CD4-positive, alpha-beta memory T cell (primary cell): ENCODE measurements at regions of chr17 and their contacts with region 1.

Region 1: DNA sequence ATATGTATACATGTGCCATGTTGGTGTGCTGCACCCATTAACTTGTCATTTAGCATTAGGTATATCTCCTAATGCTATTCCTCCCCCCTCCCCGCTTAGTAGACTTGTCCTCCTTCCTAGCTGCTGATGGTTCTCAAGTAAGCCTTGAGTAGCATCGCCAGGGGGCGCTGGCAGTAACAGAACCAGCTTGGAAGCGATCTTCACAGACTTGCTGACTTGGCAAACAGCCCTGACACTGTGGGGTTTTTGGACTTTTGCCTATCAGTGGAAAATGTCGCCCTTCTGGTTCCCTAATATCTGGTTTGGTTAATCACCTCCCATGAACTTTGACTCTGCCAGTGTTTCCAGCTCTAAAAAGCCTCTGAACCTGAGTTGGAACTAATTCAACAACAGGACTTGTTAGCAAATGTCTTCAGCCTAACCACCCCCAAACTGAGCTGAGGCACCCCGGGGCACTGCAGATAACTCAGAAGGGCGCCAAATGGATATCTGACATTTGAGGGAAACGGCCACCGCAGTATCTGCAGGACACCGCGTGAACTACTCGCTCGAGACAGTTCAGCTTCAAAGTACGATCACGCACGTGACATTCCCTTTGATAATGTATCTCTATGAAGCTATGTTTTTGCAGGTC is 15.4 kb upstream of the SPATA32 start:
- DNase-seq: peak; percentile 83 to 91 (median 85)
- H3K4me3 ChIP-seq: no peak overlapping the region
- H3K4me3 Mint-ChIP-seq: no peak overlapping the region
- H3K27ac ChIP-seq: no peak overlapping the region
- H3K27ac Mint-ChIP-seq: peak overlapping the region in 6 of 7 donors; percentile 15 to 86 (median 48)
- H3K4me1 ChIP-seq: peaks cover 6% of the 10 kb centered on the region
- H3K4me1 Mint-ChIP-seq: peaks cover 8 to 11% (median 10%) of the 10 kb centered on the region in 4 donors
- H3K27me3 ChIP-seq: no peaks in the 10 kb centered on the region
- H3K27me3 Mint-ChIP-seq: no peaks in the 10 kb centered on the region

Region 2: DNA sequence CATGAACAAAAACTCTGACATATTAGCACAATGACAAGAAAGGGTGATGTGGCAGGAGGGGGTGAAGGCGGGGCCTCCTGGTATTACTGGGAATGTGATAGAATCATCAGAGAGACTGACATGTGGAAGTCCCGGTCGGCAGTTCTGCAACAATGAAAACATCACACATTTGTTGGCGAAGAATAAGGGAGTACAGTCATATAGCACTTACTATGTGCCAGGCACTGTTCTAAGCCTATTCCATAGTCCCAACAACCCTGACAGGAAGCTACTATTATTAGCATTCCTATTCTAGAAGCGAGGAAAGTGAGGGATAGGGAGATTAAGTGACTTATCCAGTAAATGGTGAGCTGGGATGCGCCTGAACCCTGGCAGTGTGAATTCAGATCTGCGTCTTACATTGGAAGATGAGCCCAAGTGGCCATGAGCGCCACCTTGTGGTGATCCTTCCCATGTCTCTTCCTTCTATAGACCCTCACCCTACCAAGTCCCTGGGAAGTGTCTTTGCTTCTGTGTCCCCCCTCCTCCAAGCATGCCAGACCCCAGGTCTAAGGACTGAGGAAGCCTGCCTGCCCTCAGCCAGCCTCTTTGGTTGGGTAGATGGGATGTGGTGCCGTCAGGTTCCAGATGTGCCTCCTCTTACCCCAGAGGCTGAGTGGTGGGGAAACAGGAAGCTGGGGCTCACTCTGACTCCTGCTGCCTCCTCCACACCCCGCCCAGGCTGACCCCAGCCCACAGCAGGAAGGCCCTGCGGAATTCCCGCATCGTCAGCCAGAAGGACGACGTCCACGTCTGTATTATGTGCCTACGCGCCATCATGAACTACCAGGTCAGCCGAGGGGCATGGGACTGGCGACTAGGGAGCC is 41.7 kb before region 1 on chr17:
- CTCF ChIA-PET with region 1: interaction called, 20 read pairs
- POLR2A ChIA-PET with region 1: interaction called, 3 read pairs
- intact Hi-C with region 1: loop called (anchors 5 kb)
- DNase-seq: peak; percentile 72 to 78 (median 73)
- H3K4me3 ChIP-seq: no peak overlapping the region
- H3K4me3 Mint-ChIP-seq: peak overlapping the region in 3 of 8 donors; percentile 17 to 63 (median 29)
- H3K27ac ChIP-seq: peak overlapping the region; percentile 57
- H3K27ac Mint-ChIP-seq: peak overlapping the region; percentile 88 to 99 (median 93)
- H3K4me1 ChIP-seq: peaks cover 54% of the 10 kb centered on the region
- H3K4me1 Mint-ChIP-seq: peaks cover 38 to 70% (median 53%) of the 10 kb centered on the region in 4 donors
- H3K27me3 ChIP-seq: no peaks in the 10 kb centered on the region
- H3K27me3 Mint-ChIP-seq: no peaks in the 10 kb centered on the region

Region 3: GRCh38 chr17:45307290-45308015 is 30.1 kb after region 1 on chr17:
- CTCF ChIA-PET with region 1: interaction called, 63 read pairs
- POLR2A ChIA-PET with region 1: interaction called, 25 read pairs
- intact Hi-C with region 1: loop called (anchors 1 kb)
- DNase-seq: peak in 3 of 5 donors; percentile 29 to 69 (median 35)
- H3K4me3 ChIP-seq: no peak overlapping the region
- H3K4me3 Mint-ChIP-seq: peak overlapping the region in 7 of 8 donors; percentile 21 to 68 (median 57)
- H3K27ac ChIP-seq: peak overlapping the region; percentile 43
- H3K27ac Mint-ChIP-seq: peak overlapping the region; percentile 66 to 91 (median 86)
- H3K4me1 ChIP-seq: peaks cover 94% of the 10 kb centered on the region
- H3K4me1 Mint-ChIP-seq: peaks cover 58 to 91% (median 73%) of the 10 kb centered on the region in 4 donors
- H3K27me3 ChIP-seq: no peaks in the 10 kb centered on the region
- H3K27me3 Mint-ChIP-seq: no peaks in the 10 kb centered on the region

Region 4: GRCh38 chr17:45371414-45372327 is 94.3 kb after region 1 on chr17:
- CTCF ChIA-PET with region 1: interaction called, 12 read pairs
- POLR2A ChIA-PET with region 1: no interaction called
- intact Hi-C with region 1: no loop called
- DNase-seq: no peak
- H3K4me3 ChIP-seq: no peak overlapping the region
- H3K4me3 Mint-ChIP-seq: peak overlapping the region in 7 of 8 donors; percentile 47 to 80 (median 69)
- H3K27ac ChIP-seq: no peak overlapping the region
- H3K27ac Mint-ChIP-seq: peak overlapping the region in 1 of 7 donors; percentile 7
- H3K4me1 ChIP-seq: peaks cover 7% of the 10 kb centered on the region
- H3K4me1 Mint-ChIP-seq: peaks cover 5 to 16% (median 8%) of the 10 kb centered on the region in 4 donors
- H3K27me3 ChIP-seq: no peaks in the 10 kb centered on the region
- H3K27me3 Mint-ChIP-seq: peaks cover 6 to 10% of the 10 kb centered on the region in 2 donors

Region 5: DNA sequence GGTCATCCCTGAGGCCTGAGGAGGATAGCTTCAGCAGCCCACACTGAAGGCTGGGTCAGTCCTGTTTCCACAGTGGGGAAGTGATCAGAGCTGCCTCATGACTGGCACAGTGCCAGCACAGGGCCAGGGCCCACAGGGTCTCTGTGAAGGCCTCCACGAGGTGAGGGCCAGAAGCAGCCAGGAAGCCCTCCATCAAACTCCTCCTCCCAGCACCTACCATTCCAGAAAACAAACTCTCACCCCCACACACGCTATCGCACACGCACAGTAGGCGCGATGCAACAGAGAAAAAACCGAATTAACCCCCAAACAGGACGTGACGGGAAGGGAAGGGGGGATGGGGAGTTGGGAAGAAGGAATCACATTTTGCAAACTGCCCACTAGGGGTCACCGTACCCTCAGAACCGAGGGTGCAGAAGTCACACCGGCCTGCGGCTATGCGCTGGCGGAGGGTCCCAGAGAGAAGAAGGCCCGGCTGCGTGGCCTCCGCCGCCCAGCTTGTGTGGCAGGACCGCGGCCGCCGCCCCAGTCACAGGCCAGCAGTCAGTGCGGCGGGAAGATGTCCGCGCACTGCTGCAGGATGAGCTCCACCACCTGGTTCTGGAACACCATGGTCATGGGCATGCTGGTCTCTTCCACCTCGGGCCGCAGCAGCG is 117.7 kb after region 1 on chr17:
- CTCF ChIA-PET with region 1: interaction called, 215 read pairs
- POLR2A ChIA-PET with region 1: interaction called, 12 read pairs
- intact Hi-C with region 1: no loop called
- DNase-seq: peak in 4 of 5 donors; percentile 21 to 36 (median 28)
- H3K4me3 ChIP-seq: no peak overlapping the region
- H3K4me3 Mint-ChIP-seq: no peak overlapping the region
- H3K27ac ChIP-seq: no peak overlapping the region
- H3K27ac Mint-ChIP-seq: peak overlapping the region in 2 of 7 donors; percentile 16 to 37
- H3K4me1 ChIP-seq: no peaks in the 10 kb centered on the region
- H3K4me1 Mint-ChIP-seq: peaks cover 0 to 5% (median 1%) of the 10 kb centered on the region in 4 donors
- H3K27me3 ChIP-seq: no peaks in the 10 kb centered on the region
- H3K27me3 Mint-ChIP-seq: no peaks in the 10 kb centered on the region